ENCODE measurements at regions of chr5 and their contacts with region 1.

Region 1: GRCh38 chr5:32753765-32754164 is 42.6 kb downstream of the NPR3 start:
- DNase-seq: peak; percentile 9
- ATAC-seq: peak; percentile 18; the same call in 1 of the 2 replicates
- H3K4me3 ChIP-seq: no peak overlapping the region
- H3K27ac ChIP-seq: no peak overlapping the region
- H3K4me1 ChIP-seq: no peaks in the 10 kb centered on the region
- H3K27me3 ChIP-seq: no peaks in the 10 kb centered on the region
- CTCF ChIP-seq: 0 out of 2 replicates have a peak, but pooled peaks have one; percentile 15

Region 2: GRCh38 chr5:33153831-33154230 is 400.1 kb after region 1 on chr5:
- CTCF ChIA-PET with region 1: no interaction called
- POLR2A ChIA-PET with region 1: interaction called, 11 read pairs
- intact Hi-C with region 1: no loop called
- DNase-seq: peak; percentile 73
- ATAC-seq: peak; percentile 31; the same call in 1 of the 2 replicates
- H3K4me3 ChIP-seq: no peak overlapping the region
- H3K27ac ChIP-seq: peak overlapping the region; percentile 54
- H3K4me1 ChIP-seq: peaks cover 13% of the 10 kb centered on the region
- H3K27me3 ChIP-seq: no peaks in the 10 kb centered on the region
- CTCF ChIP-seq: no peak

Region 3: DNA sequence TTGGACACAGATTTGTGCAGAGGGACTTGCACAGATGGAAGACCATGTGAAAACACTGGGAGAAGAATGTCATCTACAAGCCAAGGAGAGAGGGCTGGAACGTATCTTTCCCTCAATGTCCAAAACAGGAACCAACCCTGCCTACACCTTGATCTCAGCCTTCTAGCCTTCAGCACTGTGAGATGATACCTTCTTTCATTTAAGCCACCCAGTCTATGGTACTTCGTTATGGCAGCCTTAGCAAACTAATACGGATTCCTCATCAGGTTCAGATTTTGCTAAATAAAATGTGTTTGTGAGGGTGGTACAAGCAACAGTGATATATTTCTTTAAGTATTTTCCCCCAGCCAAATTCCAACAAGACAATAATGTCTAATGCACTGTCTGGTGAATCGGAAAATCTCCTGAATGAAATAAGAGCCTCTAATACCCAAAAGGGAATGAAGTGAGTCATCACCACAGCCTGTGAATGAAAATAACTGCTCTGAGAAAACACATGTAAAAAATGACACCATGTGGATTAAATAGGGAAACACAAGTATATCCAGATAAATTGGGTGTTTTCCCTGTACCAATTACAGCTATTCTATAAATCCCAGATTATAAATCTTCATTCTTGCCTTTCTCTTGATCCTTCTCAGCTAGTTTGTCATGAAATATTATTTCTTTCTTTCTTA is 504.2 kb after region 1 on chr5:
- CTCF ChIA-PET with region 1: no interaction called
- POLR2A ChIA-PET with region 1: no interaction called
- intact Hi-C with region 1: no loop called
- DNase-seq: peak; percentile 79
- ATAC-seq: peak; percentile 97
- H3K4me3 ChIP-seq: no peak overlapping the region
- H3K27ac ChIP-seq: peak overlapping the region; percentile 21
- H3K4me1 ChIP-seq: peaks cover 26% of the 10 kb centered on the region
- H3K27me3 ChIP-seq: no peaks in the 10 kb centered on the region
- CTCF ChIP-seq: peak; percentile 47